ENCODE measurements at regions of chr10 and their contacts with region 1.

Region 1: GRCh38 chr10:68955832-68956532 is at the start of gene DDX21:
- DNase-seq: peak; percentile 87 to 96 (median 90)
- H3K4me3 ChIP-seq: peak within 1 kb of the TSS; percentile 64 to 97
- H3K4me3 Mint-ChIP-seq: peak within 1 kb of the TSS; percentile 97 to 100 (median 100)
- H3K27ac ChIP-seq: peak within 1 kb of the TSS; percentile 100
- H3K27ac Mint-ChIP-seq: peak within 1 kb of the TSS; percentile 98 to 100 (median 100)
- H3K4me1 ChIP-seq: peaks cover 46% of the 10 kb centered on the region
- H3K4me1 Mint-ChIP-seq: peaks cover 16 to 47% (median 35%) of the 10 kb centered on the region in 4 donors
- H3K27me3 ChIP-seq: no peaks in the 10 kb centered on the region
- H3K27me3 Mint-ChIP-seq: no peaks in the 10 kb centered on the region
- total RNA-seq, gene DDX21: 50.6 to 57.1 TPM

Region 2: DNA sequence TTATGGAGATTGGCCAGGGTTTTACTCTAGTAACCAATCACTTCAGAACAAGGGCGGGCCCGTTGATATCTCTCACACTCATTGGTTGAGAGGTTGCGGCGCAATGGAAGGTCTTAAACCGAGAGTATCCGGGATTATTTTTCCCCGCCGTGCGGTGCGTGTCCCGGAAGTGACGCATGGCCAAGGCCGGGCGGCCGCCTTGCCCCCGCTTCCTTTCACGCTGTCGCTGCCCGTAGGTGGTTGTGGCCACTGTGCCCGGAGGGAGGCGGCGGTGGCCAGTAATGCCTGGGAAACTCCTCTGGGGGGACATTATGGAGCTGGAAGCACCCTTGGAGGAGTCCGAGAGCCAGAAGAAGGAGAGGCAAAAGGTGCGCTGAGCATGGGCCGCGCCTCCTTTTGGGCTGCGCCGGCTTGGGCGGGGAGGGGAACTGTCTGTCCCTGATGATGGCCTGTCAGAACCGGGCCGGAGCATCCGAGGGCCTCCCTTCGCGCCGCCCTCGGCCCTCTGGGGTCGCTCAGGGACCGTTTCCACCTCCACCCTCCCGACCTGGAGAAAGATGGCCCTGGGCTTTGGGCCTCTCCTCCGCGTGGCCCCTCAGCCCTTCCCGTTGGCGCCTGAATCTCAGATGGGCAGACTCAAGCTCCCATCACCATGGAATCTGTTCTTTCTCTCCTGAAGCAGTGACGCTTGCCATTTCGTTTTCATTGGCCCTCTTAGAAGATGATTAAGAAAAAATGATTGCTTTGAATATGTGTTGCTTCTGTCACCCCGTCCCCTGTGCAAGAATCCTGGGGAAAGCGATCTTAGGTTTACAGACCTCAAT is 54.7 kb before region 1 on chr10 and contains the start of gene DDX50:
- CTCF ChIA-PET with region 1: interaction called, 12 read pairs
- POLR2A ChIA-PET with region 1: interaction called, 22 read pairs
- intact Hi-C with region 1: loop called (anchors 1 kb)
- DNase-seq: peak; percentile 94 to 98 (median 96)
- H3K4me3 ChIP-seq: peak within 1 kb of the TSS; percentile 58 to 85
- H3K4me3 Mint-ChIP-seq: peak within 1 kb of the TSS; percentile 97 to 99 (median 98)
- H3K27ac ChIP-seq: peak within 1 kb of the TSS; percentile 97
- H3K27ac Mint-ChIP-seq: peak within 1 kb of the TSS; percentile 99 to 100 (median 99)
- H3K4me1 ChIP-seq: peaks cover 37% of the 10 kb centered on the region
- H3K4me1 Mint-ChIP-seq: peaks cover 25 to 61% (median 40%) of the 10 kb centered on the region in 4 donors
- H3K27me3 ChIP-seq: no peaks in the 10 kb centered on the region
- H3K27me3 Mint-ChIP-seq: no peaks in the 10 kb centered on the region
- total RNA-seq, gene DDX50: 41.1 to 41.9 TPM

Region 3: GRCh38 chr10:68938119-68938518 is 17.9 kb before region 1 on chr10:
- CTCF ChIA-PET with region 1: interaction called, 12 read pairs
- POLR2A ChIA-PET with region 1: interaction called, 9 read pairs
- intact Hi-C with region 1: no loop called
- DNase-seq: no peak
- H3K4me3 ChIP-seq: no peak overlapping the region
- H3K4me3 Mint-ChIP-seq: no peak overlapping the region
- H3K27ac ChIP-seq: no peak overlapping the region
- H3K27ac Mint-ChIP-seq: peak overlapping the region in 2 of 7 donors; percentile 25 to 52
- H3K4me1 ChIP-seq: no peaks in the 10 kb centered on the region
- H3K4me1 Mint-ChIP-seq: peaks cover 0 to 13% (median 4%) of the 10 kb centered on the region in 4 donors
- H3K27me3 ChIP-seq: no peaks in the 10 kb centered on the region
- H3K27me3 Mint-ChIP-seq: no peaks in the 10 kb centered on the region

Region 4: DNA sequence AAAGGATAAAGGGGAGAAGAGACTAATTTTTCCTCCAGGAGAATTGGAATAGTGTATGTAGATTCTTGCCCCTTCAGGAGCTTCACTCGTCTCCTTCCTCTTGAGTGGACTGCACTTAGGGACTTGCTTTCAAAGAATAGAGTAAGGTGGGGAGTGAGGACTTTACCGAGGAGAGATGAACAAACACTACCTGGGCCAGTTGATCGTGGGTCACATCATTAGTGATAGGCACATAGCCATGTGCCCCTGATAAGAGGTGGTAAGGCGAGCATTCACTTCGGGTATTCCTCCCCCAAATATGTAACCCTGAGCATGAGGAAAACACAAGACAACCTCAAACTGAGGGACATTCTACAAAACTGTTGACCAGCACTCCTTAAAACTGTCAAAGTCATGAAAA is 18.0 kb after region 1 on chr10:
- CTCF ChIA-PET with region 1: interaction called, 10 read pairs
- POLR2A ChIA-PET with region 1: interaction called, 9 read pairs
- intact Hi-C with region 1: no loop called
- DNase-seq: no peak
- H3K4me3 ChIP-seq: no peak overlapping the region
- H3K4me3 Mint-ChIP-seq: no peak overlapping the region
- H3K27ac ChIP-seq: no peak overlapping the region
- H3K27ac Mint-ChIP-seq: peak overlapping the region in 4 of 7 donors; percentile 1 to 50 (median 19)
- H3K4me1 ChIP-seq: peaks cover 12% of the 10 kb centered on the region
- H3K4me1 Mint-ChIP-seq: peaks cover 7 to 12% (median 10%) of the 10 kb centered on the region in 4 donors
- H3K27me3 ChIP-seq: no peaks in the 10 kb centered on the region
- H3K27me3 Mint-ChIP-seq: no peaks in the 10 kb centered on the region

Region 5: GRCh38 chr10:68988530-68989316 is 32.7 kb after region 1 on chr10 and contains the start of gene KIFBP:
- CTCF ChIA-PET with region 1: interaction called, 12 read pairs
- POLR2A ChIA-PET with region 1: interaction called, 25 read pairs
- intact Hi-C with region 1: loop called (anchors 1 kb)
- DNase-seq: peak; percentile 82 to 90 (median 84)
- H3K4me3 ChIP-seq: peak within 1 kb of the TSS; percentile 79 to 99
- H3K4me3 Mint-ChIP-seq: peak within 1 kb of the TSS; percentile 92 to 100 (median 99)
- H3K27ac ChIP-seq: peak within 1 kb of the TSS; percentile 71
- H3K27ac Mint-ChIP-seq: peak within 1 kb of the TSS; percentile 86 to 99 (median 98)
- H3K4me1 ChIP-seq: peaks cover 49% of the 10 kb centered on the region
- H3K4me1 Mint-ChIP-seq: peaks cover 36 to 63% (median 53%) of the 10 kb centered on the region in 4 donors
- H3K27me3 ChIP-seq: no peaks in the 10 kb centered on the region
- H3K27me3 Mint-ChIP-seq: no peaks in the 10 kb centered on the region
- total RNA-seq, gene KIFBP: 17.9 to 18.5 TPM

Region 6: DNA sequence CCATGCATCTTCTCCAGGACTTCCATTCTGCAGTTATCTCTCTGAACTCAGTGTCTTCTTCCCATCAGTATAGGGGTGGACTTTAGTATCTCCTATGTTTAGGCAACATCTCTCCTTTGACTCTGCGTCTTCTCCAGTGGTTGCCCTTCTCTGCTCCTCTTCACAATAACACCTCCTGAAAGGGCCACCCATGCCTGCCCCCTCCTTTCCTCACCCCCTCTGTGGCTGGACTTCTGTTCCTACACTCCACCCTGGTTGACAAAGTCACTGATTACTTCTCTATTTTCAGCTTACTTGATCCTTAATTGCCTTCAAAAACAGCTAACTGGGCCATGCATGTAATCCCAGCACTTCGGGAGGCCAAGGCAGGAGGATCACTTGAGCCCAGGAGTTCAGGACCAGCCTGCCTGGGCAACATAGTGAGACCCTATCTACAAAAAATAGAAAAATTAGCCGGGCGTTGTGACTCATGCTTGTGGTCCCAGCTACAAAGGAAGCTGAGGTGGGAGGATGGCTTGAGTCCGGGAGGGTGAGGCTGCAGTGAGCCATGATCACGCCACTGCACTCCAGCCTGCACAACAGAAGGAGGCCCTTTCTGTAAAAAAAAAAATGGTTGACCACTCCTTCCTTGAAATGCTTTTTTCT is 145.6 kb after region 1 on chr10:
- CTCF ChIA-PET with region 1: no interaction called
- POLR2A ChIA-PET with region 1: no interaction called
- intact Hi-C with region 1: no loop called
- DNase-seq: no peak
- H3K4me3 ChIP-seq: no peak overlapping the region
- H3K4me3 Mint-ChIP-seq: peak overlapping the region in 5 of 8 donors; percentile 15 to 71 (median 35)
- H3K27ac ChIP-seq: no peak overlapping the region
- H3K27ac Mint-ChIP-seq: peak overlapping the region in 6 of 7 donors; percentile 47 to 91 (median 73)
- H3K4me1 ChIP-seq: peaks cover 19% of the 10 kb centered on the region
- H3K4me1 Mint-ChIP-seq: peaks cover 25 to 46% (median 30%) of the 10 kb centered on the region in 4 donors
- H3K27me3 ChIP-seq: no peaks in the 10 kb centered on the region
- H3K27me3 Mint-ChIP-seq: no peaks in the 10 kb centered on the region

Region 7: GRCh38 chr10:69123747-69124562 is 168.0 kb after region 1 on chr10 and contains the start of gene VPS26A:
- CTCF ChIA-PET with region 1: interaction called, 5 read pairs
- POLR2A ChIA-PET with region 1: interaction called, 15 read pairs
- intact Hi-C with region 1: loop called (anchors 1 kb)
- DNase-seq: peak; percentile 98 to 100 (median 98)
- H3K4me3 ChIP-seq: peak within 1 kb of the TSS; percentile 47 to 81
- H3K4me3 Mint-ChIP-seq: peak within 1 kb of the TSS; percentile 92 to 96 (median 94)
- H3K27ac ChIP-seq: peak within 1 kb of the TSS; percentile 96
- H3K27ac Mint-ChIP-seq: peak within 1 kb of the TSS; percentile 96 to 99 (median 98)
- H3K4me1 ChIP-seq: peaks cover 37% of the 10 kb centered on the region
- H3K4me1 Mint-ChIP-seq: peaks cover 13 to 29% (median 21%) of the 10 kb centered on the region in 4 donors
- H3K27me3 ChIP-seq: no peaks in the 10 kb centered on the region
- H3K27me3 Mint-ChIP-seq: no peaks in the 10 kb centered on the region
- total RNA-seq, gene VPS26A: 31.7 to 35.9 TPM